Posterior cingulate gyrus (tissue), 11 donors: ENCODE measurements at regions of chr1 and their contacts with region 1.

Region 1: GRCh38 chr1:210311726-210312493 is 16.8 kb upstream of the HHAT start:
- DNase-seq: peak in 1 of 10 donors; percentile 34

Region 2: DNA sequence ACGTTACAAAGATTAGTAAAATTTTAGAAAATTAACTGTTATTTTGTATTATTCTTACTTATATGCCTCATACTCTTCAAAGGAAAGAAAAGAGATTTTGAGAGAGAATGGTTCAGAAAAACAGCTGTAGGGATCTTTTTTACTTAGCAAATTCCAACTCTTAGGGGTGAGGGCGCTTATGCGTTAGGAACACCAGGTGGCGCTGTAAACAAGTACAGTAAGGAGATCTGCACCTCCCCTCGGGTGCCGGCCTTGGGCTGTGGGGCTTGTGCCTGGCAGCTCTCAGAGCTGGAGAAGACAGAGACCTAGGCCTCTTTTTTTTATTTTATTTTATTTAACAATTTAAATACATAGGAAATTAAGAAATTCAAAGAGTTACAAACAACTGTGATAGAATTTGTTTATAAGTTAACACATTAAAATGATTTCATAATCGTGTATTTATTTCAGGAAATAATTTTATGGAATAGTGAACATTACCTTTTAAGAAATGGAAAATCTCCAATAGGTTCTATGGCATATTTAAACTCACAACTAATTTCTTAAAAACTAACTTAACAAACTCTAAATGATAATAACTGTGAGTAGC is 451.5 kb before region 1 on chr1:
- intact Hi-C with region 1: loop called (anchors 5 kb)
- DNase-seq: peak; percentile 66 to 97 (median 84)

Region 3: GRCh38 chr1:210143465-210144062 is 168.3 kb before region 1 on chr1:
- intact Hi-C with region 1: loop called (anchors 1 kb)
- DNase-seq: peak in 9 of 10 donors; percentile 15 to 87 (median 74)

Region 4: DNA sequence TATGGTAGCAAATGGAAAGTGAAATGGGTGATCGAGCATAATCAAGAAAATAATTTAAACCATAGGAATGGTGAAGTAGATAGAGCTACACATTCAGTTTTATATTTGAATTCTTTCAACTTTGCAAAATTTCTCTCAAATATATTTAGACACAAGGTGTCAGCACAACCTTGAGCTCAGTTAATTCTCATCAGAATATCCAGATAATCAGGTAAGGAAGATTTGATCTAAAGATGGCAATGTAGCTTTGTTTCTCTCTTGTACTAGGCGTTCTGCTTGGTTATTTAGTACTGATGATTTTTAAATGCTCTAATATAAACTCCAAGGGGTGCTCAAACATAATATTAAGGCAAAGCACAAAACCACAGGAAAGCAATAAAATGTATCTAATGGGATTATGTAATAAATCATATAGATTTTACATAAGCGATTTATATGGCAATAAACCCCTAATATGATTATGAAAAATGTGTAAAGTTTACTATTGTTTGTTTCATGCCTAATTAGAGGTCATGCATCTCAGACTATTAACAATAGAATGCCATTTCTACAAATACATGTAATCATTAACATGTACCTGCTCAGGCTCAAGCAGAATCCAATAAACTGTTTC is 111.7 kb before region 1 on chr1:
- intact Hi-C with region 1: loop called (anchors 2 kb)
- DNase-seq: no peak

Region 5: DNA sequence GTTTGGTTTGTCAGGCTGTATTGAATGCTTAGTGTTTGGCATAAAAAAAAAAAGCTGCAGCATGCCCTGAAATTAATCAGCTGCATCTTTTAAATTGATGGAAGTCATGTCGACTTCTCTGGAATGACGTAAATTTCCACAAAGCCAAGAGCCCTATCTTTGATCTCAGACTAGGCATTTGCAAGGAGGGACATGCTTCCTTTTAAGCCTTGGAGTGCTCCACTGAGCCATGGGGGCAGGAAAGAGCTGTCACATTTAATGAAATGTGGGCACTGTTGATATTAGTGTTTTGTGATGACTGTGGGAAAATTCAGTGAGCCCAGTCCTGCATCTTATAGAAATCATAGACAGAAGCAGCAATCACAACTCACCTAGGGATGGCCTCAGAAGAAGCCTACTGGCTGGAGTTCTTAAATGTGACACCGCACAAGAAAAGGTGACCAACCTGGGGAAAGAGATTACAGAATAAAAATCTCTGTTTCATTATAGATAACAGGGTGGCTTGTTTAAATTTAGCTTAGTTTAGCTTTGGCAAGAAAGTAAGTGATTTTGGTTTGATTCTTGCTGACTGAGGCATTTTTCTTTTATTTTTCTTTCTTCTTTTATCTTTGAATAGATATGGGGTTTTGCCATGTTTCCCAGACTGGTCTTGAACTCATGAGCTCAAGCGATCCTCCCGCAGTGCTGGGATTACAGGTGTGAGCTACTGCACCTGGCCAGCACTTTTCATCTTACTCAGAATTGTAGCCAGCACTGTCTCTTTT is 205.0 kb after region 1 on chr1:
- intact Hi-C with region 1: no loop called
- DNase-seq: no peak

Region 6: DNA sequence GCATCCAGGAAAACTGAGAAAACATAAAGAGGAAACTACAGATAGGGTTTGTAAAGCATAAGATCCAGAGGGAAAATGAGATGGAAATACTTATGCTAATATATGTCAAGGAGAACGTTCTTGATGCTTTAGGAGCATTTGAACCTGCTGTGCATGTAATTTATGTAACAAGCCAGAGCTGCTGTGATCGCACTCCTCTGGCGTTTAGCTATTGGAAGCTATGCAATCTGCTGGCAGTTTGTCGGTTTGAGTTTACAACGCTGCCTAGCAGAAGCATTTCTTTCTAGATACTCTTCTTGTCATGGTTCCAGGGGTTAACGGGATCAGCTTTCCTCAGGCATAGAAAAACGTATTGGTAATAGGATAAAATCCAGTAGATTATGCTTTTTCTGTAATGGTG is 639.4 kb after region 1 on chr1:
- intact Hi-C with region 1: no loop called
- DNase-seq: peak in 2 of 10 donors; percentile 29 to 64